ENCODE measurements at regions of chr15 and their contacts with region 1.

Region 1: GRCh38 chr15:31435261-31435911 is 108.8 kb downstream of the KLF13 start:
- DNase-seq: peak; percentile 88
- H3K4me3 Mint-ChIP-seq: peak overlapping the region; percentile 59
- H3K27ac Mint-ChIP-seq: peak overlapping the region; percentile 95
- H3K4me1 Mint-ChIP-seq: peaks cover 84% of the 10 kb centered on the region
- H3K27me3 Mint-ChIP-seq: no peaks in the 10 kb centered on the region

Region 2: GRCh38 chr15:31004220-31004733 is 431.1 kb before region 1 on chr15:
- CTCF ChIA-PET with region 1: no interaction called
- POLR2A ChIA-PET with region 1: no interaction called
- DNase-seq: peak; percentile 41
- H3K4me3 Mint-ChIP-seq: peak overlapping the region; percentile 29
- H3K27ac Mint-ChIP-seq: peak overlapping the region; percentile 70
- H3K4me1 Mint-ChIP-seq: peaks cover 37% of the 10 kb centered on the region
- H3K27me3 Mint-ChIP-seq: peaks cover 59% of the 10 kb centered on the region

Region 3: GRCh38 chr15:31419820-31420219 is 15.6 kb before region 1 on chr15:
- CTCF ChIA-PET with region 1: interaction called, 19 read pairs
- POLR2A ChIA-PET with region 1: no interaction called
- DNase-seq: no peak
- H3K4me3 Mint-ChIP-seq: no peak overlapping the region
- H3K27ac Mint-ChIP-seq: no peak overlapping the region
- H3K4me1 Mint-ChIP-seq: no peaks in the 10 kb centered on the region
- H3K27me3 Mint-ChIP-seq: no peaks in the 10 kb centered on the region

Region 4: DNA sequence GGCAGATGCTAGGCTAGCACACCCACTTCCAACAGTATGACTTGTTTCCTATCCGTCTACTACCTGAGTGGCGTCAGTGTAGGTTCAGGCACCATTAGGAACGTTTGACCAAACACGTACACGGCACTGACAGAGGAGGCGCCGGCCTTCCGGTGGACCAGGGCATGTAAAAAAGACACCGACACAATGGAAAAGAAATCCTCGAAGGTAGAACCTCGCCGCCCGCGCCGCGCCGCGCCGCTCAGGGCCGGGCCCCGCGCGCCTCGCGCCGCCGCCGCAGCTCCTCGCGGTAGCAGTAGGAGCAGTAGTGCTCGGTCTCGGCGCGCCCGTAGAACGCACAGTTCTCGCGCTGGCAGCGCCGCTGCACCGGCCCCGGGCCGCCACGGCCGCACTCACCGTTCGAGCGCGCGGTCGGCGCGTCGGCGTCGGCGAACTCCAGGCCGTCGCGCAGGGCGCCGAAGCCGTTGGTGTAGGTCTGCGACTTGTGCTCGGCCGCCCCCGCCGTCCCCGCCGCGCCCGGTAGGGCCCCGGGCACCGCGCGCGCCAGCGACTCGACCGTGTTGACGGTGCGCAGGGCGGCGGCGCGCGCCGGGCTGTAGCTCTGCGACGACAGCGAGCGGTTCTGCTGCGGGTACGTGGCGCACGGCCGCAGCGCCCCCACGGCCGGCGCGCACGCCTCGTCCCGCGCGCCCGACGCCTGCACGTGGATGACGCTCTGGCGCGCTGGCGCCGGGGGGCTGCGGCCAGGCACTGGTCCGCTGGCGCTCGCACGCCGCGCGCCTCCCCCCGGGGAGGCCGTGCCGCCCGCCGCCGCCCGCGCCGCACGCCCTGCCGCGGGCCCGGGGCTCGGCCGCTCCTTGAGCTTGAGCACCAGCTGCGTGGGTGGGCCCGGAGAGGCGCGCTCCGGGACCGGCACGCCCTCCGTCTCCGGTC is 47.9 kb after region 1 on chr15:
- CTCF ChIA-PET with region 1: interaction called, 32 read pairs
- POLR2A ChIA-PET with region 1: no interaction called
- DNase-seq: peak; percentile 58
- H3K4me3 Mint-ChIP-seq: peak overlapping the region; percentile 91
- H3K27ac Mint-ChIP-seq: peak overlapping the region; percentile 93
- H3K4me1 Mint-ChIP-seq: peaks cover 68% of the 10 kb centered on the region
- H3K27me3 Mint-ChIP-seq: peaks cover 2% of the 10 kb centered on the region

Region 5: DNA sequence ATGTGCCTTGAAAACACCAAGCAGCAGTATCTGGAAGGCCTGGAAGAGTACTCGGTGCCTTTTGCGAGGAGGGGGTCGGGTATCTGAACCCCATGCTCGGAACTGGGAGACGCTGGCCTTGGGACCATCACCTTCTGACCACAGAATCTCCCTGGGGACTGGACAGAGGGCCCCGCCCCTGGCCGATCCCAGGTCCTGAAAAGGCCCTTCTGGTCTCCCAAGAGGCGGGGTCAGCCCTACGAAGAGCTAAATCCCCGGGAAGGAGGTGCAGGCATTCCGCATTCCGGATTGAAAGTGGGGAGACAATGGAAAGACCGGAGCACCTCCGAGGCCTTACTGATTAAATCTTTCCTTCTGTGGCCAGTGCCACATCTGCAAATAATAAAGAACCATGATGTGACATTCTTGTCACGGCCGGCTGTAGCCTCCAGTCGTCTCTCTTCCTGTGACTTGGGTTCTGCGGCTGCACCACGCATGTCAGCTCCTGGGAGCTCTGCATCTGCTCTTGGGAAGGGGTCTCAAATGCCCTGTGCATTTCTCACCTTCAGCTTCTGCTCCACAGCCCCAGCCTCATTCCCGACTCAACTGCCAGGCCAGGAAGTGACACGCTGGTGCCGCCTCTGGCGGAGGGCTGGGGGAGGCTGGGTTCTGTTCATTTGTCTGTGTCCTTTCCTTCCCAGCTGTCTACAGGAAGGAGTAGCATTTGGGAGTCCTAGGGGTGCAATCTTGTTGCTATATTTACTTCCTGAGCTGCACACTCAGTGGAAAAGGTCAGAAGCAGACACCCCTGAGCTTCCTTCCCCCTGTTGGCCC is 64.8 kb after region 1 on chr15:
- CTCF ChIA-PET with region 1: no interaction called
- POLR2A ChIA-PET with region 1: no interaction called
- DNase-seq: no peak
- H3K4me3 Mint-ChIP-seq: no peak overlapping the region
- H3K27ac Mint-ChIP-seq: no peak overlapping the region
- H3K4me1 Mint-ChIP-seq: no peaks in the 10 kb centered on the region
- H3K27me3 Mint-ChIP-seq: peaks cover 2% of the 10 kb centered on the region